Uterus (tissue), 4 donors: ENCODE measurements at regions of chr16 and their contacts with region 1.

Region 1: GRCh38 chr16:75385507-75386152 is 47.7 kb downstream of the CFDP1 start:
- DNase-seq: peak in 1 of 2 donors; percentile 47
- H3K4me3 ChIP-seq: no peak overlapping the region
- H3K27ac ChIP-seq: peak overlapping the region in 1 of 2 donors; percentile 22
- H3K4me1 ChIP-seq: peaks cover 0 to 4% of the 10 kb centered on the region in 2 donors
- H3K27me3 ChIP-seq: no peaks in the 10 kb centered on the region
- CTCF ChIP-seq: peak; percentile 66 to 88 (median 70)
- POLR2A ChIP-seq: no peak

Region 2: DNA sequence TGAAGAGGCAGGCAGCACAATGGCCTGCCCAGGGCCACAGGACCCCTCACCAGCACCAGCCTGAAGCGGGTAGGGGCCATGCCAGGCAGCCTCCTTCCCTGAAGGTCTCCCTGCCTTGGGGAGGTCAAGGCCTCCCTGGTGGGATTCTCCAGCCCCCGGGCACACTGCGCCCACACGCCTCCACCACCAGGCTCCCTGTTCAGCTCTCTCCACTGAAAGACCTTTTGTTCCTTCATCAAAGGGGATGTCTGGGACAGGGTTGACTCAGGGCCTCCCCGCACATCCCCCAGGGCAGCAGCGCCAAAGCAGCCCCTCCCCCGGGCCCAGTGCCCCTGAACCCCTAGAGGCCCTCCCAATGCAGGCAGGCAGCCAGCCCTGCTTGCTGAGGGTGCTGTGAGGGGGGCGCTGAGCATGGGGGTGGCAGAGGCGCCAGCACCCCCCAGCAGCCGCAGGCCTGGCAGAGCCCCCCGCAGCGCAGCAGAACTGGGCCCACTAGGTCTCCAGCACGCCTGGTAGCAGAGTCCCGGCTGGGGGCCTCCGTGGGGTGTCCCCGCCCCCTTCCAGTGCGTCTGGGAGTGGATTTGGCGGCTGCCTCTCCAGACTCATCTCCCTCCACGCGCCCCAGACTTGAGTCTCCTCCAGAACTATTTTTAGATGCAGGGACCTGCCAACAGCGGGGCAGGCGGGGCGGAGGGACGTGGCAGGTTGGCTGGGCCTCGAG is 147.3 kb before region 1 on chr16:
- intact Hi-C with region 1: loop called (anchors 5 kb)
- DNase-seq: peak; percentile 91 to 92
- H3K4me3 ChIP-seq: peak overlapping the region; percentile 3 to 19
- H3K27ac ChIP-seq: peak overlapping the region; percentile 83 to 92
- H3K4me1 ChIP-seq: peaks cover 12 to 41% of the 10 kb centered on the region in 2 donors
- H3K27me3 ChIP-seq: no peaks in the 10 kb centered on the region
- CTCF ChIP-seq: no peak
- POLR2A ChIP-seq: no peak

Region 3: GRCh38 chr16:75251280-75252048 is 134.2 kb before region 1 on chr16 and contains the start of gene BCAR1:
- intact Hi-C with region 1: loop called (anchors 5 kb)
- DNase-seq: peak; percentile 87 to 89
- H3K4me3 ChIP-seq: peak within 1 kb of the TSS; percentile 40 to 65
- H3K27ac ChIP-seq: peak within 1 kb of the TSS; percentile 82 to 97
- H3K4me1 ChIP-seq: peaks cover 29 to 74% of the 10 kb centered on the region in 2 donors
- H3K27me3 ChIP-seq: no peaks in the 10 kb centered on the region
- CTCF ChIP-seq: peak in 3 of 4 experiments; percentile 6 to 15 (median 12)
- POLR2A ChIP-seq: peak; percentile 71 to 74
- total RNA-seq, gene BCAR1: 42.8 to 104 (median 47.2) TPM

Region 4: GRCh38 chr16:75293772-75294171 is 91.9 kb before region 1 on chr16:
- intact Hi-C with region 1: no loop called
- DNase-seq: no peak
- H3K4me3 ChIP-seq: no peak overlapping the region
- H3K27ac ChIP-seq: no peak overlapping the region
- H3K4me1 ChIP-seq: no peaks in the 10 kb centered on the region
- H3K27me3 ChIP-seq: no peaks in the 10 kb centered on the region
- CTCF ChIP-seq: no peak
- POLR2A ChIP-seq: no peak

Region 5: GRCh38 chr16:75304491-75305363 is 80.9 kb before region 1 on chr16:
- intact Hi-C with region 1: no loop called
- DNase-seq: peak in 1 of 2 donors; percentile 37
- H3K4me3 ChIP-seq: no peak overlapping the region
- H3K27ac ChIP-seq: peak overlapping the region; percentile 80 to 84
- H3K4me1 ChIP-seq: peaks cover 8% of the 10 kb centered on the region in 2 donors
- H3K27me3 ChIP-seq: no peaks in the 10 kb centered on the region
- CTCF ChIP-seq: no peak
- POLR2A ChIP-seq: no peak

Region 6: GRCh38 chr16:75351183-75351582 is 34.4 kb before region 1 on chr16:
- intact Hi-C with region 1: no loop called
- DNase-seq: no peak
- H3K4me3 ChIP-seq: no peak overlapping the region
- H3K27ac ChIP-seq: no peak overlapping the region
- H3K4me1 ChIP-seq: no peaks in the 10 kb centered on the region
- H3K27me3 ChIP-seq: no peaks in the 10 kb centered on the region
- CTCF ChIP-seq: no peak
- POLR2A ChIP-seq: no peak